ENCODE measurements at regions of chr16 and their contacts with region 1.

Region 1: GRCh38 chr16:81723098-81723723 is 55.9 kb upstream of the PLCG2 start:
- DNase-seq: peak in 6 of 9 experiments; percentile 27 to 87 (median 58)
- ATAC-seq: peak; percentile 68
- H3K4me3 ChIP-seq: no peak overlapping the region
- H3K4me3 Mint-ChIP-seq: no peak overlapping the region
- H3K27ac ChIP-seq: no peak overlapping the region
- H3K27ac Mint-ChIP-seq: no peak overlapping the region
- H3K4me1 ChIP-seq: peaks cover 6% of the 10 kb centered on the region
- H3K4me1 Mint-ChIP-seq: peaks cover 15% of the 10 kb centered on the region
- H3K27me3 ChIP-seq: no peaks in the 10 kb centered on the region
- H3K27me3 Mint-ChIP-seq: no peaks in the 10 kb centered on the region
- CTCF ChIP-seq: peak; percentile 76

Region 2: GRCh38 chr16:81204798-81205680 is 518.2 kb before region 1 on chr16:
- CTCF ChIA-PET with region 1: no interaction called
- POLR2A ChIA-PET with region 1: no interaction called
- intact Hi-C with region 1: loop called in 1 of 2 experiments (anchors 5 kb)
- DNase-seq: peak in 7 of 9 experiments; percentile 20 to 64 (median 45)
- ATAC-seq: no peak
- H3K4me3 ChIP-seq: no peak overlapping the region
- H3K4me3 Mint-ChIP-seq: no peak overlapping the region
- H3K27ac ChIP-seq: no peak overlapping the region
- H3K27ac Mint-ChIP-seq: no peak overlapping the region
- H3K4me1 ChIP-seq: no peaks in the 10 kb centered on the region
- H3K4me1 Mint-ChIP-seq: no peaks in the 10 kb centered on the region
- H3K27me3 ChIP-seq: no peaks in the 10 kb centered on the region
- H3K27me3 Mint-ChIP-seq: peaks cover 11% of the 10 kb centered on the region
- CTCF ChIP-seq: peak; percentile 61

Region 3: GRCh38 chr16:81261049-81261648 is 462.1 kb before region 1 on chr16:
- CTCF ChIA-PET with region 1: interaction called, 4 read pairs
- POLR2A ChIA-PET with region 1: no interaction called
- intact Hi-C with region 1: loop called in 1 of 2 experiments (anchors 5 kb)
- DNase-seq: peak in 3 of 9 experiments; percentile 12 to 41 (median 36)
- ATAC-seq: no peak
- H3K4me3 ChIP-seq: no peak overlapping the region
- H3K4me3 Mint-ChIP-seq: no peak overlapping the region
- H3K27ac ChIP-seq: no peak overlapping the region
- H3K27ac Mint-ChIP-seq: no peak overlapping the region
- H3K4me1 ChIP-seq: no peaks in the 10 kb centered on the region
- H3K4me1 Mint-ChIP-seq: no peaks in the 10 kb centered on the region
- H3K27me3 ChIP-seq: no peaks in the 10 kb centered on the region
- H3K27me3 Mint-ChIP-seq: peaks cover 5% of the 10 kb centered on the region
- CTCF ChIP-seq: peak; percentile 58

Region 4: DNA sequence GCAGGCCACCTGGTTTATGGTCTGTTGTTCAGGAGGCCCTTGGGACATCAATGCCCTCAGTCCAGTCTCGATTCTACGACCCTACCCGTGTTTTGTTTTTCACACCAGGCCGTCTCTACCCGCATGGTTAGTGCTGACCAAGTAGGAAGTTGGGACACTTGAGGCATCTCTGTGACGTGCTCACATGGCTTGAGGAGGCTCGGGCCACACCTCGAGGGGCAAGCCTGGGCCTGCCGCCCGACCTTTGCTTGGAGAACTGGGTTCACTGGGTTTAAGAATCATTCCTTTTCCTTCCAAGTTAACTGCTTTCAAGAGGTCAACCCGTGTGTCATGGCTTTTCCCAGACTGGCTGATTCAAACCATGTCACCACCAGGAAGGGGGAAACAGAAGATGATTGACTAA is 191.8 kb before region 1 on chr16:
- CTCF ChIA-PET with region 1: no interaction called
- POLR2A ChIA-PET with region 1: no interaction called
- intact Hi-C with region 1: no loop called
- DNase-seq: no peak
- ATAC-seq: no peak
- H3K4me3 ChIP-seq: no peak overlapping the region
- H3K4me3 Mint-ChIP-seq: no peak overlapping the region
- H3K27ac ChIP-seq: no peak overlapping the region
- H3K27ac Mint-ChIP-seq: no peak overlapping the region
- H3K4me1 ChIP-seq: peaks cover 20% of the 10 kb centered on the region
- H3K4me1 Mint-ChIP-seq: peaks cover 25% of the 10 kb centered on the region
- H3K27me3 ChIP-seq: no peaks in the 10 kb centered on the region
- H3K27me3 Mint-ChIP-seq: no peaks in the 10 kb centered on the region
- CTCF ChIP-seq: no peak

Region 5: DNA sequence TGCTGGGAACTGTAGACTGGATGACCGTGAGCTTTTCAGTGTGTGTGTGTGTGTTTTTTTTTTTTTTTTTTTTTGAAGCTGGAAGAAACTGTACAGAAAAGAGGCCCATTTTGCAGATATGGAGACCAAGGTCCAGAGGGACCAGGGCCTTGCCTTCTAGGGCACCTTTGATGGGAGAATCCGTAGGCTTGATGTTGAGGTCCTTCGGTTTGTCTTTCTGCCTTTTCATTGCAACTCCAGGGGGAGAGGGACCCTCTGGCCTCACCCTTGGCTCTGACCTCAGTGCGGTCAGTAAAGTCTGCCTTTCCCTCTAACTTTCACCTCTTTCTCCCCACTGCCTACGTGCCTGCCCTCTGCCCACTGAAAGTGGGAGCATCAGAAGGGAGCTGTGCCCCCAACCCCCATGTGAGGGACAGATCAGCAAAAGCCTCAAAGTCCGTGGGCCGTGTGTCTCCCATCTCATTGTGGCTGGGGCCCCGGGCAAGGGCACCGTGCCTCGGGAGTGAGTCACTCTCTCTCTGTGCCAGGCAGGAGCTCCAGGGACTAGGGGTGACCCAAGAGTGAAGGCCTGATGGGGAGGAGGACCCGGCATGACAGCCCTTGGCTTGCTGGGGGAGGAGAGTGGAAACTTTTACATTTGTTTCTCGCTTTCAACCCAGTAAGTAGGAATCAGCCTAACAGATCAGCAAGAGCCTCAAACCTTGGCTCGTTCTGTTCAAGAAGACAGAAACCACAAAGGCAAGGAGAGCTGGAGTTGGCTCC is 155.0 kb before region 1 on chr16:
- CTCF ChIA-PET with region 1: no interaction called
- POLR2A ChIA-PET with region 1: no interaction called
- intact Hi-C with region 1: no loop called
- DNase-seq: no peak
- ATAC-seq: no peak
- H3K4me3 ChIP-seq: no peak overlapping the region
- H3K4me3 Mint-ChIP-seq: no peak overlapping the region
- H3K27ac ChIP-seq: no peak overlapping the region
- H3K27ac Mint-ChIP-seq: peak overlapping the region; percentile 77
- H3K4me1 ChIP-seq: no peaks in the 10 kb centered on the region
- H3K4me1 Mint-ChIP-seq: peaks cover 31% of the 10 kb centered on the region
- H3K27me3 ChIP-seq: no peaks in the 10 kb centered on the region
- H3K27me3 Mint-ChIP-seq: no peaks in the 10 kb centered on the region
- CTCF ChIP-seq: no peak

Region 6: GRCh38 chr16:81885976-81886586 is 162.9 kb after region 1 on chr16:
- CTCF ChIA-PET with region 1: no interaction called
- POLR2A ChIA-PET with region 1: no interaction called
- intact Hi-C with region 1: no loop called
- DNase-seq: peak in 4 of 9 experiments; percentile 14 to 52 (median 26)
- ATAC-seq: peak; percentile 61
- H3K4me3 ChIP-seq: no peak overlapping the region
- H3K4me3 Mint-ChIP-seq: no peak overlapping the region
- H3K27ac ChIP-seq: no peak overlapping the region
- H3K27ac Mint-ChIP-seq: no peak overlapping the region
- H3K4me1 ChIP-seq: no peaks in the 10 kb centered on the region
- H3K4me1 Mint-ChIP-seq: no peaks in the 10 kb centered on the region
- H3K27me3 ChIP-seq: no peaks in the 10 kb centered on the region
- H3K27me3 Mint-ChIP-seq: no peaks in the 10 kb centered on the region
- CTCF ChIP-seq: peak; percentile 68

Measured in CD8-positive, alpha-beta T cell (primary cell).